Activated B cell treated with CpG ODN at 0.5 μM for 24 hours (primary cell): ENCODE measurements at regions of chrX and their contacts with region 1.

Region 1: DNA sequence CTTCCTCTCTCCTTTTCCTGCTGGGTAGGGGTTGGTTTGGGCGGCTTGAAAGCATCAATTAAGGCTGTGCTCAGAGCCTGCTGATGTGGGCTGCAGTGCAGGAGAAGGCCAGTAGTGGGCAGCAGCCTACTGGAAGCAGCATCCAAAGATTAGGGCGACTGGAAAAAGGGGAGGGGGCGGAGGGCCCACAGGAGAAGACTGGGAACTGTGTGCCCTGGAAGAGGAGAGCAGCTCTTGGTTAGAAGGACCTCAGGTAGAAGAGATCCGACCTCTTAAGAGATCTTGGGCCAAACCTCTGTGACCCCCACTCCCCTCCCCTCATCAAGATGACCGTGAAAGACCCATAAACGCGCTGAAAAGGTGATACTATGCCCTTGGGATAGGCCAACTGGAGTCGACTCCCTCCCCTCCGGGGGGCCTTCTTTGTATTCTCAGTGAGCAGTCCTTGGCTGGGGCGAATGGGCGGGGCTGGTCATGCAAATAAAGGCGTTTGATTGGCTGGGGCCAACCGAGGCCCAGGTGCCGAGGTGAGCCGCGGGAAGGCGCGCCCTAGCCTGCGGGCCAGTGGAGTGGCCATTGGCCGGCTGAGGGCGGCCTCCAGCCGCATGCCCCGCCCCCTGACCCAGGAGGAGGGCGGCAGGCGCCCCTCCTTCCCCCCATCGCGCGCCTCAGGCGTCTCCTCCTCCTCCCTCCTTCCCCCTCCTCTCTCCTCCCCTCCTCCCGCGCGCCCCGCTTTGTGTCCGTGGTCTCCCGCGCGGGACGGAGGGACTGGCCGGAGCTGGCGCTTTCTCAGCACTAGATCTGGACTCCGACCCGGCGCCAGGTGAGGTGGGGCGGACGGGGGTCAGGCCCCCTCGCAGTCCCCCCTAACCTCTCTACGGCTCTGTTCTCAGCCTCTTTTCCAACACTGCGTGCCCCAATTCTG is 10.1 kb downstream of the DLG3 start:
- DNase-seq: peak; percentile 39
- ATAC-seq: peak; percentile 55
- H3K4me3 Mint-ChIP-seq: peak overlapping the region; percentile 78
- H3K27ac Mint-ChIP-seq: peak overlapping the region; percentile 46
- H3K4me1 Mint-ChIP-seq: peaks cover 43% of the 10 kb centered on the region
- H3K27me3 Mint-ChIP-seq: no peaks in the 10 kb centered on the region
- CTCF ChIP-seq: no peak

Region 2: DNA sequence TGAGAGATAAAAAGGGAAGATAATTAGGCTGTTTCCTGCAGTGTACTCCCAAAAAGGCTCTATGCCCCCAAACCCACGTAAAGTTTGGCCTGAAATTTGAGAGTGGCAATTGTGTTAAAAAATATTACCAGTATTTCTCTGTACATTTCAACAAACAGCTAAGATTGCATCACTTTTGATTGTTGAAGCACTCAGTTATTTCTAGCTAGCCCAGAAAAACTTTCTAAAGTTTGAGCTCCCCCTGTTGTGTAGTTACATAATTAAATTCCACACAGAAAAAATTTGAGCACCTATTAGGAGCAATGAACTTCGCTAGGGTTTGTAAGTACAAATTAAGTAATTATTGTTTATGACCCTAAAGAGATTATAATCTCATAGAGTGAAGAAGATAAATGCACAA is 99.4 kb after region 1 on chrX:
- CTCF ChIA-PET with region 1: no interaction called
- POLR2A ChIA-PET with region 1: no interaction called
- intact Hi-C with region 1: loop called (anchors 5 kb)
- DNase-seq: no peak
- ATAC-seq: no peak
- H3K4me3 Mint-ChIP-seq: no peak overlapping the region
- H3K27ac Mint-ChIP-seq: no peak overlapping the region
- H3K4me1 Mint-ChIP-seq: no peaks in the 10 kb centered on the region
- H3K27me3 Mint-ChIP-seq: peaks cover 2% of the 10 kb centered on the region
- CTCF ChIP-seq: no peak

Region 3: DNA sequence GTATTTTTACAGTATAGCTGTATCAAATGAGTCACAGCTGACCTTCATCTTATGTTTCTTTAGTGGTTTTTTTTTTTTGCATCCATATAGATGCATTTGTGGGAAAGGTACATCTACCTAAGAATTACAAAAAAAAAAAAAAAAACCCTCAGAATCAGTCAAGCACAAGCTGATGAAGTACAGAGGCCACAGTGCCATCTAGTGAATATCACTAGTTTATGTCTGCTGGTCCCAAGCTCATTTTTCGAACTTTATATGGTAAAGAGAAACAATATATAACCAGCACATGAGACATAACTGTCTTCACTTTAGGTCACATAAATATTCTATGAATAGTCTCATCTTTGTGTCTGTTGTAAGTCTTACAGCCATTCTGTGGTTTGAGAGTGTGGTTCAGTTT is 210.0 kb after region 1 on chrX:
- CTCF ChIA-PET with region 1: no interaction called
- POLR2A ChIA-PET with region 1: no interaction called
- intact Hi-C with region 1: loop called (anchors 1 kb)
- DNase-seq: no peak
- ATAC-seq: no peak
- H3K4me3 Mint-ChIP-seq: no peak overlapping the region
- H3K27ac Mint-ChIP-seq: no peak overlapping the region
- H3K4me1 Mint-ChIP-seq: no peaks in the 10 kb centered on the region
- H3K27me3 Mint-ChIP-seq: no peaks in the 10 kb centered on the region
- CTCF ChIP-seq: no peak

Region 4: DNA sequence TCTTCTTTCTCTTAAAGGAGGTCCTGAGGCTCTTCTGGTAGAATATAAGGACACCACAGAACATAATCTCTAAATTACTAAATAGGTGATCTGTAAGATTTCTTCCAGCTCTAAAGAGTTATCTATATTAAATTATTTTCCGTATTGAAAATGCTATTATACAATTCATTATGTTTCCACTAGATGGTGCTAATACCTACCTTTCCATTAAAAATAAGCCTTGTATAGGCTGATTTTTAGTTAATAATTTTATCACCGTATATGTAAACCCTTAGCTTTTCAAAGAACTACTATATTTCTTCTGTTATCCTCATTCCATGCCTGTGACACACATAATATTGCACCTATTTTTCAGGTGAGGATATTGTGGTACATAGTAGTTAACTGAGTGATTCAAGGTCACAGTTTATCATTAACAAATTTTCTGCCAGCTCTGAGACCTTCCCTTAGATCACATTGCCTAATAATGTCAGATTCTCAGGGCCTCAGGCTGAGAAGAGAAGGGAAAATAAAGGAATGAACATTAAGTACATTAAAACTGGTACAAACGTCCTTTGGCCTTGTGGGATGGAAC is 315.0 kb after region 1 on chrX:
- CTCF ChIA-PET with region 1: no interaction called
- POLR2A ChIA-PET with region 1: no interaction called
- intact Hi-C with region 1: loop called (anchors 5 kb)
- DNase-seq: no peak
- ATAC-seq: no peak
- H3K4me3 Mint-ChIP-seq: no peak overlapping the region
- H3K27ac Mint-ChIP-seq: no peak overlapping the region
- H3K4me1 Mint-ChIP-seq: no peaks in the 10 kb centered on the region
- H3K27me3 Mint-ChIP-seq: no peaks in the 10 kb centered on the region
- CTCF ChIP-seq: no peak